Activated naive CD4-positive, alpha-beta T cell treated with anti-CD3 and anti-CD28 coated beads for 36 hours (primary cell): ENCODE measurements at regions of chr17 and their contacts with region 1.

Region 1: GRCh38 chr17:7687908-7688807 is at the start of gene WRAP53:
- DNase-seq: peak; percentile 98
- H3K4me3 Mint-ChIP-seq: peak within 1 kb of the TSS; percentile 89
- H3K27ac Mint-ChIP-seq: peak within 1 kb of the TSS; percentile 99
- H3K4me1 Mint-ChIP-seq: peaks cover 33% of the 10 kb centered on the region
- H3K27me3 Mint-ChIP-seq: no peaks in the 10 kb centered on the region
- total RNA-seq, gene WRAP53: 13.7 to 14.7 TPM

Region 2: DNA sequence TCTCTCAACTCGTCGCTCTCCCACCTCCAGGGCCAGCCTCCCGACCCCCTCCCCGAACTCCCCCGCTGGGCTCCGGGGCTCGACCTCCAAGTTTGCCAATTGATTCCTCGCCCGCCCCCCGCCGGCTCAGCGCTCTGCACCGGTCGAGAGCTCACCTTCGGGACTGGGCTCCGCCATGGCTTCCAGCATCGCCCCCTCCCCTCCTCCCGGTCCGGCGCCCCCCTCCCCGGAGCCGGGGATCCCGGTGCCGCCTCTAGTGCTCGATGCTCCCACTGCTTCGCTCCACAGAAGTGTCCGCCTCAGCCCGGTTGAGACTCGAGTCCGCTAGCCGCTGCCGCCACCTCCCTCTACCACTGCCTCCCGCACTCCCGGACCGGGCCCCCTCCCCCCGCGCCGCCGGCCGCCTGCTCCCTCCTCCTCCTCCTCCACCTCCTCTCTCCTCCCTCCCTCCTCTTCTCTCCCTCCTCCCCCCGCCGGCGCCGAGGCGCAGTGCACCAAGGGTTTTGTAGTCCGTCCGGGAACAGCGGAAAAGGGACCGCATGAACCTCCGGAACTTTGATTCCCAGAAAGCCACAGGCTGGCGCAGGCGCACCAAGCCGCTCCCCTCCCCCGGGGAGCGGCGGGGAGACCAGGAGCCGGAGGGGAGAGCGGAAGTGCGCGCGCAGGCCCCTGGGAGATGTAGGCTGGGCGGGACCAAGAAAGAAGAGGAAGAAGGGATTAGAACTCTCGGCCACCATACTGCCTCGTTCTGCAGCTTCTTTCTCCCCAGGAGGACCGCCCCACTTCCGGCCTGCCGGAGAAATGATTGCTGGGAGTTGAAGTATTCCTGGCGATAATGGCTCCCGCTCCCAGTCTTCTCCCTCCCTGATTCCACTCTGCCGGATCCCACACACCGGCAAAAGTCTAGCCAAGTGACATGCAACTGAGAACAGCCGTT is 448.8 kb before region 1 on chr17 and contains the start of gene PHF23:
- CTCF ChIA-PET with region 1: no interaction called
- intact Hi-C with region 1: loop called (anchors 2 kb)
- DNase-seq: peak; percentile 99
- H3K4me3 Mint-ChIP-seq: peak within 1 kb of the TSS; percentile 94
- H3K27ac Mint-ChIP-seq: peak within 1 kb of the TSS; percentile 98
- H3K4me1 Mint-ChIP-seq: peaks cover 64% of the 10 kb centered on the region
- H3K27me3 Mint-ChIP-seq: no peaks in the 10 kb centered on the region
- total RNA-seq, gene PHF23: 8.4 to 10.0 TPM

Region 3: DNA sequence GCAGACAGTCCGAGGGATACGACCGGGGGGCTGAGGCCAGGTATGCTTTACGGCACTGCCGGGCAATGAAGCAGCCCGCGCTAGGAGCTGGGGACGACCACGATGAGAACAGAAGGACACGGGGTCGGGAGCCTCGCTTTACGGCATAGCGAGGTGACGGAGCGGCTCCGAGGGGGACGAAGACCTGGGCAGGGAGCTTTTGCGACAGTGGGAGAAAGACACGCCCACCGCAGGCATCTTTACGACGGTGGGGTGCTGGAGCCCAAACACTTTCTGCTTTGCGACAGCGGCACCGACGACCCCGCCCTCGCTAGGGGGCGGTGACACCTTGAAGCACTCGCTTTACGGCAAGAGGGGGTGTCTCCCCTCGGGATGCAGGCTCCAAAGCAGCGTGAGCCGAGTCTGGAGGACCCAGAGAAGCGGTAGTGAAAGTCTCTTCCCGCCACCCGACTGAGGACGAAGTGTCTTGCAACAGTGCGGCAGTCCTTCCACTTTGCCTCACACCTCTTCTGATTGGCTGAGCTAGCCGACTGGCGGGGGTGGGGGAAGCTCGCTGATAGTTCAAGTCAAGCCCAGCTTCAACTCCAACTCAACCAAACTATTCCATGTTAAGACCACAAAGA is 358.7 kb before region 1 on chr17:
- CTCF ChIA-PET with region 1: interaction called, 3 read pairs
- intact Hi-C with region 1: loop called (anchors 5 kb)
- DNase-seq: peak; percentile 98
- H3K4me3 Mint-ChIP-seq: peak overlapping the region; percentile 97
- H3K27ac Mint-ChIP-seq: peak overlapping the region; percentile 91
- H3K4me1 Mint-ChIP-seq: peaks cover 54% of the 10 kb centered on the region
- H3K27me3 Mint-ChIP-seq: no peaks in the 10 kb centered on the region

Region 4: DNA sequence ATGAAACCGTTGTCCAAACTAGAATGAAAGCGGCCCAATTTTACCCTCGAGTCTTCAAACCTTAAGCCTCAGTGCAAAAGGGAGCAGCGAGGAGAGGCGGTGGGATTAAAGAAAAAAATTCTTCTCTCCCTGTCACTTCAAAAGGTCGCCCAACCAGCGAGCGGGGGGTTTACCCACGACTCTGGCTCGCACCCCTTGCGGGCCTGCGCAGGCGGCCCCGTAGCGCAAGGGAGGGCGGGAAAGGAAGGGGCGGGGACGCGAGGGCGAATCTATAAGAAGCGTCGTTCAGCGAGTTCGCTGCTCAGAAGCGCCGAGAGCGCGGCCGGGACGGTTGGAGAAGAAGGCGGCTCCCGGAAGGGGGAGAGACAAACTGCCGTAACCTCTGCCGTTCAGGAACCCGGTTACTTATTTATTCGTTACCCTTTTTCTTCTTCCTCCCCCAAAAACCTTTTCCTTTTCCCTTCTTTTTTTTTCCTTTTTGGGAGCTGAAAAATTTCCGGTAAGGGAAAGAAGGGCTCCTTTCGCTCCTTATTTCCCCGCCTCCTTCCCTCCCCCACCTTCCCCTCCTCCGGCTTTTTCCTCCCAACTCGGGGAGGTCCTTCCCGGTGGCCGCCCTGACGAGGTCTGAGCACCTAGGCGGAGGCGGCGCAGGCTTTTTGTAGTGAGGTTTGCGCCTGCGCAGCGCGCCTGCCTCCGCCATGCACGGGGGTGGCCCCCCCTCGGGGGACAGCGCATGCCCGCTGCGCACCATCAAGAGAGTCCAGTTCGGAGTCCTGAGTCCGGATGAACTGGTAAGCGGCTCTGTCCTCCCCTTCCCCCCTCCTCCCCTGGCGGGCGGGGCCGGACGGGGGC is 203.9 kb before region 1 on chr17 and contains the start of gene POLR2A:
- CTCF ChIA-PET with region 1: no interaction called
- intact Hi-C with region 1: loop called (anchors 1 kb)
- DNase-seq: peak; percentile 95
- H3K4me3 Mint-ChIP-seq: peak within 1 kb of the TSS; percentile 93
- H3K27ac Mint-ChIP-seq: peak within 1 kb of the TSS; percentile 100
- H3K4me1 Mint-ChIP-seq: peaks cover 70% of the 10 kb centered on the region
- H3K27me3 Mint-ChIP-seq: no peaks in the 10 kb centered on the region
- total RNA-seq, gene POLR2A: 204 to 205 TPM

Region 5: GRCh38 chr17:7583253-7584109 is 104.7 kb before region 1 on chr17 and contains the start of gene MPDU1:
- CTCF ChIA-PET with region 1: interaction called, 12 read pairs
- intact Hi-C with region 1: loop called (anchors 1 kb)
- DNase-seq: peak; percentile 96
- H3K4me3 Mint-ChIP-seq: peak within 1 kb of the TSS; percentile 95
- H3K27ac Mint-ChIP-seq: peak within 1 kb of the TSS; percentile 100
- H3K4me1 Mint-ChIP-seq: peaks cover 58% of the 10 kb centered on the region
- H3K27me3 Mint-ChIP-seq: no peaks in the 10 kb centered on the region
- total RNA-seq, gene MPDU1: 48.8 to 53.5 TPM

Region 6: DNA sequence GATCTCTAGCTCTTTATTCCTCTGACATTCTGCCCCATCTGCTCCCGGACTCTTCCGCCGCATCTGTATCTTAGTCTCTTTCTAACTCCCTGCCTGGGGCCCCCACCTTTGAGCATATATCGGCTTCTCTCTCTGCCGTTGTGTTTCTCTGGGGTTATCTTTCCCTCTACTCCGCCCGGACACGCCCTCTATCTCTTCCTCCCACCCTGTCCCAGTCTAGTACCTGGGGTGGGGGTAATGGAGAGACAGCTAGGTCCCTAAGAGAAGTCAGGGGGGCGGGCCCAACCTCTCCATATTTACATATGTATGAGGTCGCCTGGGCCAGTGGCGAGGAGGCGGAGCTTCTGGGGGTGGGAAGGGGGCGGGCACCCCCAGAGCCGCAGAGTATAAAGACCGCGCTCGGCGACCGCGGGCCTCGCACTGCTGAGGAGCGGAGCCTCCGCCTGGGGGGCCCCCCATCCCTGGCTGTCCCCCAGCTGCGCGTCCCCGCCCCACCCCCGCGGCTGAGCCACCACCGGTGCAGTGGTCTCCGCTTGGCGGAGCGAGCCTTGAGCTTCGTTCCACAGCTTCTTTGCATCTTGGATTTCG is 37.6 kb before region 1 on chr17 and contains the start of gene ATP1B2:
- CTCF ChIA-PET with region 1: interaction called, 20 read pairs
- intact Hi-C with region 1: no loop called
- DNase-seq: peak; percentile 78
- H3K4me3 Mint-ChIP-seq: peak within 1 kb of the TSS; percentile 62
- H3K27ac Mint-ChIP-seq: no peak within 1 kb of the TSS
- H3K4me1 Mint-ChIP-seq: peaks cover 18% of the 10 kb centered on the region
- H3K27me3 Mint-ChIP-seq: peaks cover 22% of the 10 kb centered on the region
- total RNA-seq, gene ATP1B2: 0.14 to 0.30 TPM

Region 7: DNA sequence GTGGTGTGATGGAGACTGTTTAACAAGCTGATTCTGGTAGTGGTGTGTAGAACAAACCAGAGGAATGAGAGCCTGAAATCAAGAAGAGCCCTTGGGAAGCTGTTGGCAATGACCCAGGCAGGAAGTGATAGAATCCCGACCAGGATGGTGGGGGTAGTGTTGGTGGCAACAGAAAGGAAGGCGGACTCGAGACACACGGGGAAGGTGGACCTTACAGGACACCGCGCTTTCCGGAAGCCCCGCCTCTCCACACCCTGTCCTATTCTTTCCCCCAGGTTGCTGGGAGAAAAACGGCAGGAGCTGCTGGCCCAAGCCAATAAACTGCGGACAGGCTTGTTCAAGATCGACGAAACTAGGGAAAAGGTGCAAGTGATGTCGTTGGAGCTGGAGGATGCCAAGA is 115.8 kb after region 1 on chr17:
- CTCF ChIA-PET with region 1: no interaction called
- intact Hi-C with region 1: no loop called
- DNase-seq: no peak
- H3K4me3 Mint-ChIP-seq: no peak overlapping the region
- H3K27ac Mint-ChIP-seq: no peak overlapping the region
- H3K4me1 Mint-ChIP-seq: no peaks in the 10 kb centered on the region
- H3K27me3 Mint-ChIP-seq: peaks cover 3% of the 10 kb centered on the region

Region 8: GRCh38 chr17:7931709-7932482 is 243.7 kb after region 1 on chr17 and contains the starts of genes CNTROB and TRAPPC1:
- CTCF ChIA-PET with region 1: no interaction called
- intact Hi-C with region 1: loop called (anchors 1 kb)
- DNase-seq: peak; percentile 100
- H3K4me3 Mint-ChIP-seq: peak within 1 kb of the TSS; percentile 91
- H3K27ac Mint-ChIP-seq: peak within 1 kb of the TSS; percentile 87
- H3K4me1 Mint-ChIP-seq: peaks cover 38% of the 10 kb centered on the region
- H3K27me3 Mint-ChIP-seq: no peaks in the 10 kb centered on the region
- total RNA-seq, gene CNTROB: 49.3 to 56.3 TPM
- total RNA-seq, gene TRAPPC1: 162 to 172 TPM